Dendritic cell treated with granulocyte-macrophage colony-stimulating factor and Interleukin-4, amounts not matched to agents 40 ng/mL and 50 ng/mL, for 4 days (primary cell): ENCODE measurements at regions of chr5 and their contacts with region 1.

Region 1: DNA sequence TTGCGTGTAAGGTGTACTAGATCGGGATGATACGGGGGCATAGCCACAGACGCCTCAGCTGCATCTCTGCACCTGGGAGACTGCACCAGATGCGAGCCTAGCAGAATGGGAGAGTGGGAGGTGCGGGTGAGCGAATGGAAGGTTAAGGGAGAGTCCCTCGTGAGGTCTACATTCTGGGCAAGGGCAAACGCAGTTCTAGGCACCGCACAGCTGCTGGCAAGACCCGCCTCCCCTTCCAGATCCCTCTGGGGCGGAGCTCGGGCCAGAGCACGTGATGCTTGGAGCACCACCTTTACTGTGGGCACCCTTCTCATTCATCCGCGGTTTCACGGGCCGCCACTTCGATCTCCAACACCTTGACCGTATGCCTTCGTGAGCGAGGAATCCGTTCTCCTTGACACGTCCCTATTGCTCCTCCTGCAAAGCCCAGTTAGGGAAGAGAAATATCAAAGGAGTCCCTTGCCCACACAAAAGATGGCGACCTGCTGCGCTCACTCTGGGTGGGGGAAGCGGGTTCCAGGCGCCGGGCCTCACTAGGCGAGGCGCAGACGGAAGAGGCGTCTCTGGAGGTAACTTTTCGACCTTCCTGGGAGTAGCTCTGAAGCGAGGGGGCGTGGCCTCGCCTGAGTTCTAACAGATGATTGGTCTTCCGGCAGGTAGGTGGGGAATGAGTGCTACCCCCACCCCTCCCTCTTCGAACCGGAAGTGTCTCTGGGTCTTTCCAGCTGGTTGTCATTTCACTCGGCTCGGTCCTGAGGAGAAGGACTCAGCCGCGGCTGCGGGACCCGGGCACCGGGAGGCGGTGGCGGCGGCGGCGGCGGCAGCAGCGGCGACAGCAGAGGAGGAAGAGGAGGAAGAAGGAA is at the start of gene CPEB4:
- H3K4me3 Mint-ChIP-seq: peak within 1 kb of the TSS; percentile 94
- H3K27ac Mint-ChIP-seq: peak within 1 kb of the TSS; percentile 94
- H3K4me1 Mint-ChIP-seq: peaks cover 70% of the 10 kb centered on the region
- H3K27me3 Mint-ChIP-seq: no peaks in the 10 kb centered on the region

Region 2: GRCh38 chr5:173781814-173782670 is 105.8 kb before region 1 on chr5:
- intact Hi-C with region 1: loop called (anchors 10 kb)
- H3K4me3 Mint-ChIP-seq: peak overlapping the region; percentile 2
- H3K27ac Mint-ChIP-seq: peak overlapping the region; percentile 96
- H3K4me1 Mint-ChIP-seq: peaks cover 85% of the 10 kb centered on the region
- H3K27me3 Mint-ChIP-seq: no peaks in the 10 kb centered on the region

Region 3: GRCh38 chr5:173829817-173830216 is 58.0 kb before region 1 on chr5:
- intact Hi-C with region 1: loop called (anchors 10 kb)
- H3K4me3 Mint-ChIP-seq: no peak overlapping the region
- H3K27ac Mint-ChIP-seq: peak overlapping the region; percentile 56
- H3K4me1 Mint-ChIP-seq: peaks cover 39% of the 10 kb centered on the region
- H3K27me3 Mint-ChIP-seq: no peaks in the 10 kb centered on the region

Region 4: GRCh38 chr5:173925448-173926071 is 37.7 kb after region 1 on chr5:
- intact Hi-C with region 1: loop called (anchors 5 kb)
- H3K4me3 Mint-ChIP-seq: no peak overlapping the region
- H3K27ac Mint-ChIP-seq: peak overlapping the region; percentile 35
- H3K4me1 Mint-ChIP-seq: peaks cover 42% of the 10 kb centered on the region
- H3K27me3 Mint-ChIP-seq: no peaks in the 10 kb centered on the region